ENCODE measurements at regions of chr12 and their contacts with region 1.

Region 1: DNA sequence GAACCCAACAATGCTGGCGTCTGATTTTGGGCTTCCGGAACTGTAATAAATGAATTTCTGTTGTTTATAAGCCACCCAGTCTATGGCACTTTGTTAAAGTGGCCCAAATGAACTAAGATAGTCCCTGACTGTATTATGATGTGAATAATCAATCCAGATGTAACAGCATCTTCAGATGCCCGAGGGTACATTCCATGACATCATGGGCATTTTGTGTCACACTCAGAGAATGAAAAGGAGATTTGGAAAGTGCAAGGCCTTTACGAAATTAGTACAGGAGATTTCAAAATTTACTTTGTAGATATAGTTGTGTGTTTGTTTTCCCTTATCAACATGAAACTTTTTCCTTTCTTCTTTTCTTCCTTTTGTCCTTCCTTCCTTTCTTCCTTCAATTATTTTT is 54.2 kb upstream of the AMIGO2 start:
- DNase-seq: no peak

Region 2: DNA sequence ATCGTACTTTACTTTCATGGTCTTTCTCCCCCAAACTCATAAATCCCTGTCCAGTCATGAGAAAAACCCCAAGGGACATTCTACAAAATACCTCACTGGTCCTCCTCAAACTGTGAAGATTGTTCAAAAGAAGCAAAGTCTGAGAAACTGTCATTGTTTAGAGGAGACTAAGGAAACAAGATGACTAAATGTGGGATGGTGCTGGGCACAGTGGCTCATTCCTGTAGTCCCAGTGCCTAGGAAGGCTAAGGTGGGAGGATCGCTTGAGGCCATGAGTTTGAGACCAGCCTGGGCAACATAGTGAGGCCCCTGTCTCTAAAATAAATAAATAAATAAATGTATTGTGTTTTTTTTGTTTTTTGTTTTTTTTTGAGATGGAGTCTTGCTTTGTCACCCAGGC is 1069.4 kb before region 1 on chr12:
- intact Hi-C with region 1: loop called in 1 of 2 experiments (anchors 5 kb)
- DNase-seq: no peak

Region 3: DNA sequence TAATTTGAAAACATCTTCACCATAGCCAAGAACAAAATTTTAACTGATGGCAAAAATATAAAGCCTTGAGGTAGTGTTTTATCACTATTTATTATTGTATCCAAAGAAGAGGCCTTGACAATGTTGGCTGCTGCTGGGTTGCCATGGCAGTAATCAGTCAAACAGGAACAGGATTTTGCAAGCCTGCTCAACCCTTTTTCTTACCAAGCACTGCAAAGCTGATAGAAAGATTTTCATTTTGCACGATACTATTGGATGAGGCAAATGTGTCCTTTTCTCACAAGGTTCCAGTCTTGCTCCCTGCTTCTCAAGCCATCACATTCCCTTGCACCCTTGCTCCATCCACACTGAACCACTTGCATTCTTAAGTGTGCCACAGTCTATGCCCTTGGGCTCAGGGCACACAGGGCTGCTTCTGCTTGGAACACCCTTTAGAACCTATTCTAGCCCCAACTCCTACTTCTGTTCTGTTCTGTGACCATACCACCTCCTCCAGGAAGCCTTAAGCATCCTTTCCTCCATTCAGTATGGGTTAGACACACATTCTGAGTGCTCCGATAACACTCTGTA is 22.3 kb after region 1 on chr12:
- intact Hi-C with region 1: no loop called
- DNase-seq: no peak